ENCODE measurements at regions of chr4 and their contacts with region 1.

Region 1: DNA sequence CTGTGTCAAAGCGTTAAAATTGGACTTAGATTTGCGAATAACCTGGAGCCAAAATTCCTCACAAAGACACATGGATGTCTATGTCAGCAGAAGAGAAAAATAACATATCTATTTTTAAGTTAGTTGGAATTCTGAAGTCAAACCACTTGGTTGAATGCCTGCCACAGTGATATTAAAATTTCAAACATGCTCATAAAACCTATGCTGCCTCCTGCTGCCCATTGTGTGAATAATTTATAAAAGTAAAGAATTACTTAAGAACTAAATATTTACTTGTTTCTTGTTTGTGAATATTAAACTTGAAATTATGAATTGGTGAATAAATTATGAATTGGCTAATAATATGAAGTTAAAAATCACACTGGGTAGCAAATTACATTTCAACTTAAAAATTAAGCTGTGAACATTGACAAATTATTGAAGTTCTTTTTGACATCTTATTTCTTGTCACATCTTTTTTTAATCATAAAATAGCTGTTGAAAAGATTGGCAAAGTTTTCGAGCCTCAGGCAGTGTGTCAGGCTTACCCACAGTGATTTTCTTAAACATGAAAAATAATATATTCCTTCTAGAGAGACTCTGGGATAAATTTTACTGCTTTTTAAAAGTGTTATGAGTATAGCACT is 35.4 kb downstream of the FABP2 start:
- DNase-seq: peak; percentile 10
- H3K4me3 Mint-ChIP-seq: no peak overlapping the region
- H3K27ac Mint-ChIP-seq: no peak overlapping the region
- H3K4me1 Mint-ChIP-seq: peaks cover 23% of the 10 kb centered on the region
- H3K27me3 Mint-ChIP-seq: no peaks in the 10 kb centered on the region
- CTCF ChIP-seq: no peak

Region 2: GRCh38 chr4:119041951-119042560 is 244.4 kb before region 1 on chr4:
- CTCF ChIA-PET with region 1: no interaction called
- intact Hi-C with region 1: loop called (anchors 1 kb)
- DNase-seq: peak; percentile 47
- H3K4me3 Mint-ChIP-seq: no peak overlapping the region
- H3K27ac Mint-ChIP-seq: no peak overlapping the region
- H3K4me1 Mint-ChIP-seq: peaks cover 7% of the 10 kb centered on the region
- H3K27me3 Mint-ChIP-seq: no peaks in the 10 kb centered on the region
- CTCF ChIP-seq: peak; percentile 53

Region 3: DNA sequence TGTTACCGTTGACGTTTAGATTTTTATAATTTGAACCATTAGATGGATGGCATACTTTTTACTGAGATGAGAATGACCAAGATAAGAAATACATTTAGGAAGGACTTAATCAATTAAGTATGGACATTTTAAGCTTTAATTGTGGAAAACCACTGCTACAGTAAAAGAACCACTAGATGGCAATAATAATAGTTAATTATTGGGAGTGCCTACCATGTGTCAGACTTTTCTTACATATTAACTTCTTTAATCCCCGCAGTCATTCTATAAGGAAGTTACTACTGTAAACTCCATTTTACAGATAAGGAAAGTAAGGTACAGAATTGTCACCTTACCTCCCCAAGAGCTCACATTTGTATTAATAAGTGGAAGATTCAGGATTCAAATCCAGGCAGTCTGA is 199.4 kb before region 1 on chr4:
- CTCF ChIA-PET with region 1: no interaction called
- intact Hi-C with region 1: loop called (anchors 1 kb)
- DNase-seq: no peak
- H3K4me3 Mint-ChIP-seq: no peak overlapping the region
- H3K27ac Mint-ChIP-seq: peak overlapping the region; percentile 60
- H3K4me1 Mint-ChIP-seq: peaks cover 50% of the 10 kb centered on the region
- H3K27me3 Mint-ChIP-seq: no peaks in the 10 kb centered on the region
- CTCF ChIP-seq: no peak

Region 4: GRCh38 chr4:119238068-119238722 is 48.3 kb before region 1 on chr4:
- CTCF ChIA-PET with region 1: no interaction called
- intact Hi-C with region 1: no loop called
- DNase-seq: no peak
- H3K4me3 Mint-ChIP-seq: no peak overlapping the region
- H3K27ac Mint-ChIP-seq: no peak overlapping the region
- H3K4me1 Mint-ChIP-seq: peaks cover 19% of the 10 kb centered on the region
- H3K27me3 Mint-ChIP-seq: no peaks in the 10 kb centered on the region
- CTCF ChIP-seq: no peak

Measured in Calu3 (cell line).